ENCODE measurements at regions of chr4 and their contacts with region 1.

Region 1: GRCh38 chr4:157052429-157053040 is 23.4 kb upstream of the GLRB start:
- DNase-seq: no peak
- H3K4me3 ChIP-seq: no peak overlapping the region
- H3K27ac ChIP-seq: no peak overlapping the region
- H3K4me1 ChIP-seq: no peaks in the 10 kb centered on the region
- H3K27me3 ChIP-seq: no peaks in the 10 kb centered on the region
- CTCF ChIP-seq: no peak
- EP300 ChIP-seq: no peak
- POLR2A ChIP-seq: no peak

Region 2: GRCh38 chr4:156475322-156475721 is 577.2 kb before region 1 on chr4:
- intact Hi-C with region 1: loop called (anchors 10 kb)
- DNase-seq: peak in 1 of 2 donors; percentile 63
- H3K4me3 ChIP-seq: no peak overlapping the region
- H3K27ac ChIP-seq: no peak overlapping the region
- H3K4me1 ChIP-seq: no peaks in the 10 kb centered on the region
- H3K27me3 ChIP-seq: no peaks in the 10 kb centered on the region
- CTCF ChIP-seq: peak in 4 of 7 experiments; percentile 23 to 47 (median 41)
- EP300 ChIP-seq: no peak
- POLR2A ChIP-seq: no peak

Measured in stomach (tissue), 19 donors.